HAP-1 (cell line): ENCODE measurements at regions of chr4 and their contacts with region 1.

Region 1: GRCh38 chr4:76430519-76431388 is 4.3 kb upstream of the SHROOM3 start:
- DNase-seq: peak; percentile 39 to 85
- H3K4me3 ChIP-seq: no peak overlapping the region
- H3K4me1 ChIP-seq: peaks cover 37% of the 10 kb centered on the region
- H3K27me3 ChIP-seq: no peaks in the 10 kb centered on the region

Region 2: GRCh38 chr4:76494871-76495590 is 64.3 kb after region 1 on chr4:
- in situ Hi-C with region 1: loop called (anchors 5 kb)
- DNase-seq: no peak
- H3K4me3 ChIP-seq: no peak overlapping the region
- H3K4me1 ChIP-seq: peaks cover 28% of the 10 kb centered on the region
- H3K27me3 ChIP-seq: no peaks in the 10 kb centered on the region

Region 3: DNA sequence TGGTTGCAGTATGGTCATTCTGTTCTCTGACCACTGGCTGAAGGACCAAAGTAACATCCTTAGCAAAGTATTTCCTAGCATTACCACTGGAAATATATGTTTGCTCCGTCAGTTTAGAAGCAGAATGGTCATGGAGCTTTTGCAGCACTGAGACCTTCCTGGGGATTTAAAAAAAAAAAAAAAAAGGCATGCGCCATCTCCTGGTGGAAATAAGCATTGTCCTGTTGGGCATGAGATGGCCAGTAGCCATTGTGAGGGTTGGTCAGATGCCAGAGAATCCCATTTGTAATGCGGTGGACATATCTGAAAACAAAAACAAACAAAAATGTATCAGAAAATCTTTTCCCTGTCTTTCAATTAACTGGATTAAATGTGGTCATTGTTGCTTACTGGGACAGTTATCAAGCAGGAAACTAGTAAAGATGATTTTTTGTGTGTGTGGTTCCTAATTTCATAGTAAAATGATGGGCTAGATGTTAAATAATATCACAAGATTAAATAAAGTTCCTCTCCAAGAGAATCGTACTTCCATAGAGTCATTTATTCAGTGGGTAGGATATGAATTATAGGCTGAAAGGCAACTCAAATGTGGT is 327.6 kb after region 1 on chr4:
- in situ Hi-C with region 1: loop called (anchors 5 kb)
- DNase-seq: peak; percentile 34 to 59
- H3K4me3 ChIP-seq: no peak overlapping the region
- H3K4me1 ChIP-seq: no peaks in the 10 kb centered on the region
- H3K27me3 ChIP-seq: no peaks in the 10 kb centered on the region